B cell (primary cell): ENCODE measurements at regions of chr6 and their contacts with region 1.

Region 1: GRCh38 chr6:130885392-130886192 is 58.4 kb downstream of the SMLR1 start:
- DNase-seq: peak; percentile 84
- ATAC-seq: peak; percentile 92
- H3K4me3 ChIP-seq: no peak overlapping the region
- H3K4me3 Mint-ChIP-seq: no peak overlapping the region
- H3K27ac ChIP-seq: no peak overlapping the region
- H3K27ac Mint-ChIP-seq: no peak overlapping the region
- H3K4me1 ChIP-seq: no peaks in the 10 kb centered on the region
- H3K4me1 Mint-ChIP-seq: no peaks in the 10 kb centered on the region
- H3K27me3 ChIP-seq: no peaks in the 10 kb centered on the region
- H3K27me3 Mint-ChIP-seq: no peaks in the 10 kb centered on the region
- CTCF ChIP-seq: peak; percentile 98

Region 2: GRCh38 chr6:131063028-131063763 is 177.6 kb after region 1 on chr6 and contains the start of gene EPB41L2:
- CTCF ChIA-PET with region 1: interaction called, 6 read pairs
- POLR2A ChIA-PET with region 1: no interaction called
- intact Hi-C with region 1: loop called (anchors 2 kb)
- DNase-seq: peak; percentile 93
- ATAC-seq: peak; percentile 89
- H3K4me3 ChIP-seq: peak within 1 kb of the TSS; percentile 73 to 94 (median 90)
- H3K4me3 Mint-ChIP-seq: peak within 1 kb of the TSS; percentile 92
- H3K27ac ChIP-seq: peak within 1 kb of the TSS; percentile 72 to 78
- H3K27ac Mint-ChIP-seq: peak within 1 kb of the TSS; percentile 81
- H3K4me1 ChIP-seq: peaks cover 27 to 32% of the 10 kb centered on the region in 2 donors
- H3K4me1 Mint-ChIP-seq: peaks cover 33% of the 10 kb centered on the region
- H3K27me3 ChIP-seq: no peaks in the 10 kb centered on the region
- H3K27me3 Mint-ChIP-seq: no peaks in the 10 kb centered on the region
- CTCF ChIP-seq: peak; percentile 31
- total RNA-seq, gene EPB41L2: 59.8 and 61.0 TPM in 2 replicates

Region 3: GRCh38 chr6:131167773-131168172 is 282.2 kb after region 1 on chr6:
- CTCF ChIA-PET with region 1: interaction called, 25 read pairs
- POLR2A ChIA-PET with region 1: no interaction called
- intact Hi-C with region 1: loop called (anchors 1 kb)
- DNase-seq: no peak
- ATAC-seq: no peak
- H3K4me3 ChIP-seq: no peak overlapping the region
- H3K4me3 Mint-ChIP-seq: no peak overlapping the region
- H3K27ac ChIP-seq: no peak overlapping the region
- H3K27ac Mint-ChIP-seq: no peak overlapping the region
- H3K4me1 ChIP-seq: no peaks in the 10 kb centered on the region
- H3K4me1 Mint-ChIP-seq: no peaks in the 10 kb centered on the region
- H3K27me3 ChIP-seq: no peaks in the 10 kb centered on the region
- H3K27me3 Mint-ChIP-seq: no peaks in the 10 kb centered on the region
- CTCF ChIP-seq: no peak

Region 4: DNA sequence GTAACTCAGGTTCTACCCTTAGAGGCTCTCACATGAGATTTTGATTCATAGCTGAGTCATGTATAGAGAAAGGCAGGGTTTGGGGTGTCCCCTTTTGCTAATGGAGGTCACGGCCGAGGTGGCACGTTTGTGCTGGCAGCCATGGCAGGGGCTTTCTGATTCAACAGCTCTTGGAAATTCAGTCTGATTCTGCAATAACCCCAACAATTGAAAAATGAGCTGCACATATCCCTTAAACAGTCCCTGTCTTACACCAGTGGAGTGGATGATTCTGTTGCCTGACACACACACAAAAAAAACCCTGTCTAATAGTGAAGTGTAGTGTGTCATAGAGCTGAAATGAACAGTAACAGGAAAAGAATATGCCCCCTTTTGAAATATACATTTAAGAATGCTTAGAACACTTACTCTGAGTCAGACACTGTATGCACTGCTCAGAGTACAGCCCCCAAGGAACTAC is 647.0 kb after region 1 on chr6:
- CTCF ChIA-PET with region 1: interaction called, 79 read pairs
- POLR2A ChIA-PET with region 1: no interaction called
- intact Hi-C with region 1: no loop called
- DNase-seq: no peak
- ATAC-seq: no peak
- H3K4me3 ChIP-seq: no peak overlapping the region
- H3K4me3 Mint-ChIP-seq: no peak overlapping the region
- H3K27ac ChIP-seq: no peak overlapping the region
- H3K27ac Mint-ChIP-seq: no peak overlapping the region
- H3K4me1 ChIP-seq: peaks cover 3% of the 10 kb centered on the region in 2 donors
- H3K4me1 Mint-ChIP-seq: peaks cover 5% of the 10 kb centered on the region
- H3K27me3 ChIP-seq: peaks cover 0 to 4% (median 0%) of the 10 kb centered on the region in 4 experiments
- H3K27me3 Mint-ChIP-seq: peaks cover 11% of the 10 kb centered on the region
- CTCF ChIP-seq: no peak

Region 5: DNA sequence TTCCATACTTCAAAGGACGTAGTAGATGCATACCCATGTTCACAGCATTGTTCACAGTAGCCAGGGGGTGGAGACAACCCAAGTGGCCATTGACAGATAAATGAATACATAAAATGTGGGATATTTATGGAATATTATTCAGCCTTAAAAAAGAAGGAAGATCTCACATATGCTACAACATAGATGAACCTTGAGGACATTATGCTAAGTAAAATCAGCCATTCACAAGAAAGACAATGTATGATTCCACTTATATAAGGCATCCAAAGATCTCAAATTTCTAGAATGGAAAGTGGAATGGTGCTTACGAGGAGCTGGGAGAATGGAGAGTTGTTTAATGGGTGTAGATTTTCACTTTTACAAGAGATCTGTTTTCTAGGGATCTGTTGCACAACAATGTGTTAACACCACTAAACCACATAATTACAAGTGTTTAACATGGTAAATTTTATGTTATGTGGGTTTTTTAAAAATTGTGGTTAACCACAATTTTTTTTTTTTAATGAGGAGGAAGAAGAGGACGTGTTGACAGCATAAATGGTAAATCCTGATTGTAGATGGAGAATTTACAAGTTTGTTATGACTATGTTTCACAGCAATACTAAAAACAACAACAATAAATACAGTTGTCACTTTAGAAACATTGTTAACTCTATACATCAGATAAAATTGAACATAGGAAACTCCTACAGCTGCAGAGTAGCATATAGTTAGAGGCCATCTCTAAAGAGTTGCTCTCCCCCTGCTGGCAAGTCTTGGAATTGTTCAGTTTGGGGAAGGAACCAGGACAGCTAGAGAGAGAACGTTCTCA is 1024.0 kb after region 1 on chr6:
- CTCF ChIA-PET with region 1: interaction called, 10 read pairs
- POLR2A ChIA-PET with region 1: no interaction called
- intact Hi-C with region 1: no loop called
- DNase-seq: peak; percentile 79
- ATAC-seq: peak; percentile 94
- H3K4me3 ChIP-seq: no peak overlapping the region
- H3K4me3 Mint-ChIP-seq: no peak overlapping the region
- H3K27ac ChIP-seq: no peak overlapping the region
- H3K27ac Mint-ChIP-seq: no peak overlapping the region
- H3K4me1 ChIP-seq: peaks cover 0 to 5% of the 10 kb centered on the region in 2 donors
- H3K4me1 Mint-ChIP-seq: peaks cover 6% of the 10 kb centered on the region
- H3K27me3 ChIP-seq: peaks cover 0 to 13% (median 5%) of the 10 kb centered on the region in 4 experiments
- H3K27me3 Mint-ChIP-seq: peaks cover 33% of the 10 kb centered on the region
- CTCF ChIP-seq: peak; percentile 98